Transverse colon (tissue), 4 donors: ENCODE measurements at regions of chr16 and their contacts with region 1.

Region 1: GRCh38 chr16:57422026-57422944 is 17.7 kb downstream of the CCL17 start:
- DNase-seq: peak; percentile 62
- H3K4me3 ChIP-seq: no peak overlapping the region
- H3K27ac ChIP-seq: no peak overlapping the region
- H3K4me1 ChIP-seq: peaks cover 6 to 22% (median 12%) of the 10 kb centered on the region in 4 donors
- H3K27me3 ChIP-seq: no peaks in the 10 kb centered on the region
- CTCF ChIP-seq: peak; percentile 48 to 68 (median 54)
- EP300 ChIP-seq: no peak
- POLR2A ChIP-seq: no peak

Region 2: DNA sequence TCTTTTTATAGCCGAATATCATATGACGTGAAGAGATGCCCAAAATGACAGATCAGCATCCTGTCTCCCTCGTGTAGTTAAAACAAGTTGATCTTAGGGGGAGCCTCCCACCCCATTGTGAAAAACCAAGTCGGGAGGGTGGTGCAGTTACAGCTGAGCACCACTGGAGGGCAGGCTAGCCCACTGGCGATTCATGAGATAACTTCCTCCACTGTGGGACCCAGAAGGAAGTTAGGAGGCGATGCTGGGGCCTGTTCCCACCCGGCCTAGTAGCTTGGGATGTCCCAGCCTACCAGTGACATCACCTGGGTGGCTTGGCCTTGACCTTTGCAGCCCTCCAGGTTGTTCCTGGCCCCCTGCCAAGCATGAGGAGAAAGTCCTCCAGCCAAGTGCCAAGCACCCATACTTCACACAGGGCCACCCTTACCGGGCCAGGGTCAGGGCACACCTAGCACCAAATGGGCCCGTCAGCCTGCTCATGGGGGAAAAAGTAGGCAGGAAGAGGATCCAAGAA is 338.0 kb before region 1 on chr16:
- in situ Hi-C with region 1: loop called in 2 of 4 experiments (anchors 25 kb)
- intact Hi-C with region 1: no loop called
- DNase-seq: peak; percentile 72
- H3K4me3 ChIP-seq: no peak overlapping the region
- H3K27ac ChIP-seq: peak overlapping the region in 2 of 4 donors; percentile 0 to 28
- H3K4me1 ChIP-seq: peaks cover 0 to 7% (median 3%) of the 10 kb centered on the region in 4 donors
- H3K27me3 ChIP-seq: no peaks in the 10 kb centered on the region
- CTCF ChIP-seq: peak; percentile 97 to 99 (median 99)
- EP300 ChIP-seq: no peak
- POLR2A ChIP-seq: no peak

Region 3: GRCh38 chr16:57300387-57301125 is 121.7 kb before region 1 on chr16:
- in situ Hi-C with region 1: loop called (anchors 5 to 10 kb)
- intact Hi-C with region 1: loop called (anchors 2 kb)
- DNase-seq: peak; percentile 99
- H3K4me3 ChIP-seq: peak overlapping the region in 3 of 4 donors; percentile 27 to 52 (median 36)
- H3K27ac ChIP-seq: peak overlapping the region; percentile 88 to 96 (median 92)
- H3K4me1 ChIP-seq: peaks cover 9 to 38% (median 24%) of the 10 kb centered on the region in 4 donors
- H3K27me3 ChIP-seq: no peaks in the 10 kb centered on the region
- CTCF ChIP-seq: peak; percentile 84 to 100 (median 93)
- EP300 ChIP-seq: no peak
- POLR2A ChIP-seq: peak; percentile 40

Region 4: GRCh38 chr16:57372372-57373116 is 49.7 kb before region 1 on chr16 and contains the start of gene CX3CL1:
- in situ Hi-C with region 1: no loop called
- intact Hi-C with region 1: no loop called
- DNase-seq: peak; percentile 76
- H3K4me3 ChIP-seq: peak within 1 kb of the TSS; percentile 8 to 44 (median 28)
- H3K27ac ChIP-seq: peak within 1 kb of the TSS; percentile 68 to 81 (median 74)
- H3K4me1 ChIP-seq: peaks cover 4 to 20% (median 14%) of the 10 kb centered on the region in 4 donors
- H3K27me3 ChIP-seq: no peaks in the 10 kb centered on the region
- CTCF ChIP-seq: no peak
- EP300 ChIP-seq: no peak
- POLR2A ChIP-seq: peak; percentile 57
- total RNA-seq, gene CX3CL1: 1.7 to 13.5 (median 1.8) TPM in 3 of 4 donors, not detected in the other

Region 5: DNA sequence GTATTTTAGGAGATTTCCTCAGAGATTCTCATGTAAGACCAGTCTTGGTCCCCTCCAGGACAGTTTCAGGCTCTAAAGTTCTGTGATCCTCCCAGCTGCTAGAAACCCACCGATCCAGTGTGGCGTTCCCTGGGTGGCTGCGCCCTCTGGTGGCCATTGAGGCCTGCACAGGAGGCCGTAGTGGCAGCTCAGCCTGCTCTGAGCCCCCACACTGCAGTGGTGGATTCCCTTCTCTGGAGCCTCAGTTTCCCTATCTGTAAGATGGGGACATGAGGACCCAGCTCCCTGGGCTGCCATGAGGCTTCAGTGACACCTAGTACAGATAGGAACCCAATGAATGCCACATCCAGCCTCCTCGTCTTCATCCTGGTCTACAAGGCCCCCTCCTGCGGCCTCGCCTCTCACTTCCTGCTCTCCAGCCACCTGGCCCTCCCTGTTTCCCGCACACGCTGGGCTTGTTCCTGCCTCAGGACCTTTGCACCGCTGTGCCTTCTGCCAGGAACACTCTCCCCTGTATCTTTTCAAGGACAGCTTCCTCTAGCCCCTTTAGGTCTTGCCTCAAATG is 97.6 kb after region 1 on chr16:
- in situ Hi-C with region 1: loop called in 2 of 4 experiments (anchors 10 kb)
- intact Hi-C with region 1: no loop called
- DNase-seq: peak; percentile 83
- H3K4me3 ChIP-seq: no peak overlapping the region
- H3K27ac ChIP-seq: no peak overlapping the region
- H3K4me1 ChIP-seq: peaks cover 0 to 7% (median 0%) of the 10 kb centered on the region in 4 donors
- H3K27me3 ChIP-seq: no peaks in the 10 kb centered on the region
- CTCF ChIP-seq: peak; percentile 92 to 96 (median 95)
- EP300 ChIP-seq: no peak
- POLR2A ChIP-seq: no peak